ENCODE measurements at regions of chr11 and their contacts with region 1.

Region 1: DNA sequence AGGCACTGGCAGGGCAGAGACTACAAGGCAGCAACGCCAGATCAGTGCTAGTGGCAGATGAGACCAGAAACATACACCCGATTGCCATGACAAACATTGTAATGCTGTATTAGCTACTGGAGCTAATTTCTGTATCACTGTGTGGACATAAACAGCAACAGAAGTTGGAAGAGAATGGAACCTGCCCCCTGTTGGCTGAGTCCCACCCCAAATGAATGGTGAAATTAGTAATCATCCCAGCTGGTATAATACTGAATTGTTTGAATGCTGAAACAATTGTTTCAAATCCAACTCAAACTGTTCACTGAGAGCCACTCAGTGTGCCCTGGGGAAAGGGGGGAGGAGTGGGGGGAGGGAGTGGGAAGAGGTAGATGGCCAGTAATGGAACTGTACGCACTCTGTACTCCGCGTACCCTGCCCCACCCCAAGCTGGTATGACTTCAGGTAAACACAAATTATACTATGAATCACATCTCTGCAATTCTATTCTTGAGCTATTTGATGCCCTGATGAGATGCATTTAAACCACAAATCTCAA is 11.2 kb upstream of the BIRC3 start:
- DNase-seq: peak; percentile 51 to 86
- ATAC-seq: peak; percentile 92 to 93
- H3K4me3 ChIP-seq: peak overlapping the region; percentile 6; the same call in 2 of the 3 replicates
- H3K27ac ChIP-seq: peak overlapping the region; percentile 77 to 85
- H3K4me1 ChIP-seq: peaks cover 34% of the 10 kb centered on the region
- CTCF ChIP-seq: 0 out of 3 replicates have a peak, but pooled peaks have one; percentile 11
- EP300 ChIP-seq: peak in 1 of 2 experiments; percentile 25; a peak in 1 of 5 replicates
- POLR2A ChIP-seq: no peak
- RAD21 ChIP-seq: peak in 1 of 2 experiments; percentile 14; a peak in 2 of 5 replicates

Region 2: DNA sequence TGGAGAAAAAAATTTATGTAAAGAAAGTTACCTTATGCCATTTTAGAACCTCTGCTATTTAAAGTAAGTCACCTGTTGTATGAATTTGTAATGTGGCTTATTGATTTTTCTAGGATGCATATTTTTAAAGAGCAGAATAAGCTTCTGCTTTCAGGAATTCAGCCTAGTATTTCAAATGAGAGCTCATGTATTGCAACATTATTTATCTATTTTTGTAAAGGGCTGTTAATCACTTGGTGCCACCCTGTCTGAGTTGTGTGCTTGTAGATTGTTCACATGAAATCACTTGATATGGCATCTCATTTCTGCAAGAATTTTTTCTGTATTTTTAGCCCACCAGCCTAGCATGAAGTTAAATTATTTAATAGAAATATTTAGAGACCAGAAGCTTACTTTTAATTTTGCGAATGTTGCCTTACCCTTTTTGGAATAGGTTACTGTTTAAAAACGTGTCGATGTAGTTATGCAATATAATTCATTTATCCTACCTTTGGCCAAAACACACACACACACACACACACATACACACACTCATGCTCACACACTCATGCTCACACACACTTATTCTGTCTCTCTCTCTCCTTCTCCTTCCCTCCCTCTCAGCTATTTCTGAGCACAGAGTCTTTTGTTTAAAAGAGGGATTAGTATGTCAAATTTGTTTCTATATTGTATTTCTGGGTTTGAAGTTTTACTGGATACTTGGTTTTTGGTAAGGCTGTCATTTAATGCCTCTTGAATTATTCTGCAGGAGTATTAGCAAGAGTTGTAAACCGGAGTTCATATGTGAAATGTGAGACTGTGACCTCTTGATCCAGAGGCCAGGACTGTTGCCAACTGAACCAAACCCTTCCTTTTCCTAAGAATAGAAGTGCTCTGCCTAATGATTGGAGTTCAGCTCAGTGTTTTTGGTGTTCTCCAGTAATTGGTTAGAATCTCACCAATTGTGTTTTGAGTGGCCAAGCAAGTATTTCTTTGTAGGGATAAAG is 161.5 kb before region 1 on chr11:
- CTCF ChIA-PET with region 1: no interaction called
- POLR2A ChIA-PET with region 1: no interaction called
- DNase-seq: no peak
- ATAC-seq: no peak
- H3K4me3 ChIP-seq: 0 out of 3 replicates have a peak overlapping the region, but pooled peaks have one; percentile 17
- H3K27ac ChIP-seq: peak overlapping the region; percentile 20 to 47; a peak in 1 of 6 replicates
- H3K4me1 ChIP-seq: peaks cover 40% of the 10 kb centered on the region
- CTCF ChIP-seq: no peak
- EP300 ChIP-seq: no peak
- POLR2A ChIP-seq: no peak
- RAD21 ChIP-seq: no peak

Region 3: GRCh38 chr11:102293873-102294601 is 12.1 kb before region 1 on chr11:
- CTCF ChIA-PET with region 1: interaction called, 14 read pairs
- POLR2A ChIA-PET with region 1: interaction called, 3 read pairs
- DNase-seq: peak in 1 of 2 experiments; percentile 71
- ATAC-seq: peak; percentile 83 to 92
- H3K4me3 ChIP-seq: no peak overlapping the region
- H3K27ac ChIP-seq: peak overlapping the region; percentile 64 to 71; a peak in 4 of 6 replicates
- H3K4me1 ChIP-seq: peaks cover 31% of the 10 kb centered on the region; the same call in 2 of the 3 replicates
- CTCF ChIP-seq: peak; percentile 59
- EP300 ChIP-seq: no peak
- POLR2A ChIP-seq: no peak
- RAD21 ChIP-seq: peak; percentile 60 to 71

Region 4: GRCh38 chr11:102317099-102317767 is 11.1 kb after region 1 on chr11 and contains the start of gene BIRC3:
- CTCF ChIA-PET with region 1: interaction called, 15 read pairs
- POLR2A ChIA-PET with region 1: no interaction called
- DNase-seq: peak; percentile 72 to 97
- ATAC-seq: peak; percentile 91 to 94
- H3K4me3 ChIP-seq: peak within 1 kb of the TSS; percentile 52
- H3K27ac ChIP-seq: peak within 1 kb of the TSS; percentile 80 to 91
- H3K4me1 ChIP-seq: peaks cover 68% of the 10 kb centered on the region
- CTCF ChIP-seq: 0 out of 3 replicates have a peak, but pooled peaks have one; percentile 3
- EP300 ChIP-seq: peak in 1 of 2 experiments; percentile 65; a peak in 1 of 5 replicates
- POLR2A ChIP-seq: peak; percentile 59
- RAD21 ChIP-seq: no peak
- polyA plus RNA-seq, gene BIRC3: 13.8 and 17.5 TPM in 2 replicates